Astrocyte of the cerebellum (primary cell): ENCODE measurements at regions of chr9 and their contacts with region 1.

Region 1: GRCh38 chr9:113657703-113658544 is 194.4 kb downstream of the RGS3 start:
- DNase-seq: peak; percentile 68
- H3K4me3 ChIP-seq: no peak overlapping the region
- CTCF ChIP-seq: peak; percentile 97

Region 2: DNA sequence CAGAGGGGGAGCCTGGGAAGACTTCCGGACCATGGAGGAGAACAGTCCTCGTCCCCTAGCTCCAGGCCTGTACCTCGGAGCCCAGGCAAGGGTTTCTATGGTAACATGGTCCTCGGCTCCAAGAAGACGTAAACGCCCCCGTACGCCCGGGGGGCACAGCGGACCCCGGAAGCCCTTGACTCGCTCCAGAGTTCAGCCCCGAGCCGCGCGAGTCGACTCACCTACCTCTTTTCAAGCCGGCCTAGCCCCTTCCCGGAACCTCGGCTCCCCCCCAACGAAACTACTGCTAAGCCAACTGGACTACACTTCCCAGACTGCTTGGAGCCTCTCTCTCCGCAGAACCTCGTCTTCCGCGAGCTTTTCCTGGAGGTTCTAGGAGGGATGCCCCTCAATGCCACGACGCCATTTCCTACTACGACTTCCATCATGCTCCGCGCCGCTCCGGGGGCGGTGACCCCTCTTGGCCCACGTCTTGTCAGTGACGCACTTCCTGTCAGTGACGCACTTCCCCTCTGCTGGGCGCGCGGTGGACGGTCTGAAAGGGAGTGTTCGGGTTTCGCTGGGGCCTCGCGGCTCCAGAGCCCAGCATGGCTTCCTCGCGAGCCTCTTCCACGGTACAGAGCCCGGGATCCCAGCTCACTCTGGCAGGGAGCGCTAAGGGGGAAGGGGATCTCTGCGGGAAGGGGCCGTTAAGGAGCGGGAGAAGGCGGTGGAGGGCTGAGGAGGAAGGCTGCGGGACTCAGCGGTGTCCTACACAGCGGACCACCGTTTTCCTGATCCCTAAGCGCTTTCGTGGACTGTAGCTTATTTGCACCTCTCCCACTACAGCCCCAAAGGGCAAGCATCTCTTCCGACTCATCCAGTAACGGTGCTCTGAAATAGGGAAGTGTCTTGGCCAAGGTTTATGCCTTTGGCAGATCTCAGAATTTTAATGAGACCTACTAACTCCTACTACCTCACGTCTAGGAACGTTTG is 382.5 kb before region 1 on chr9 and contains the starts of genes CDC26 and PRPF4:
- in situ Hi-C with region 1: loop called (anchors 25 kb)
- DNase-seq: peak; percentile 99
- H3K4me3 ChIP-seq: peak within 1 kb of the TSS; percentile 95
- CTCF ChIP-seq: no peak

Region 3: DNA sequence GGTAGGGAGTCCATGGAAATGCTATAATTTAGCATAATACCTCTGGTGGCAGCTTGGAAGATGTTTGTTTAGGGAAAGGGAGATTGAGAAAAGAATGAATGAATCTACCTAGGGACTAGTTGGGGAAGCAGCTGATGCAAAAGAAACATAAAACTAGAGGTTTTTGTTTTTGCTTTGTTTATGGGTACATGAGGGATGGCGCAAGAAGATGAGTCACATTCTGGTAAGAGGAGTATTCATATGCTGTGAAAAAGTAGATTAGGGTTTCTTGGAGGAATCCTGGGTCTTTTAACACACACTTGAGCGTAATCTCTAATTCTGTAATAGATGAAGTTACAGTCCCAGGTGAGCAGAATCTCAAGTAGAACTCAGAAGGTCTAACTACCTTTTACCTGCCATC is 230.3 kb before region 1 on chr9:
- in situ Hi-C with region 1: loop called (anchors 5 kb)
- DNase-seq: no peak
- H3K4me3 ChIP-seq: no peak overlapping the region
- CTCF ChIP-seq: no peak

Region 4: DNA sequence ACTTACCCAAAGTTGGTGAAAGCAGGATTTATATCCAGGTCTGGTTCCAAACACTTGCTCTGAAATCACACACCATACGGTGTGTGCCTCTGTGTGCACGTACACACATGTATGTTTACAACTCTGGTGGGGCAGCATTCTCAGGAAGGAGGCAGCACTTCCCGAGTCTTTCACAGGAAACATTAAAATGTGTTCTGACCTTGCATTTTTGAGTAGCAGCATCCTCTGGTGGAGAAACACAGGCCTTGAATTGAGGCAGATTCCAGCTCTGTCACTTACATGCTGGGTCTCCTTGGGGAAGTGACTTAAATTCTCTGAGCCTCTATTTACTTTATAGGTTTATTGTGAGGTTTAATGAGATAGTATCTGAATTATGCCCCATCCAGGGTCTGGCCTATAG is 68.0 kb before region 1 on chr9:
- in situ Hi-C with region 1: loop called (anchors 5 kb)
- DNase-seq: no peak
- H3K4me3 ChIP-seq: no peak overlapping the region
- CTCF ChIP-seq: peak; percentile 86